GM18951 (cell line): ENCODE measurements at regions of chr5 and their contacts with region 1.

Region 1: GRCh38 chr5:172714491-172715421 is 56.2 kb downstream of the DUSP1 start:
- POLR2A ChIP-seq: no peak

Region 2: DNA sequence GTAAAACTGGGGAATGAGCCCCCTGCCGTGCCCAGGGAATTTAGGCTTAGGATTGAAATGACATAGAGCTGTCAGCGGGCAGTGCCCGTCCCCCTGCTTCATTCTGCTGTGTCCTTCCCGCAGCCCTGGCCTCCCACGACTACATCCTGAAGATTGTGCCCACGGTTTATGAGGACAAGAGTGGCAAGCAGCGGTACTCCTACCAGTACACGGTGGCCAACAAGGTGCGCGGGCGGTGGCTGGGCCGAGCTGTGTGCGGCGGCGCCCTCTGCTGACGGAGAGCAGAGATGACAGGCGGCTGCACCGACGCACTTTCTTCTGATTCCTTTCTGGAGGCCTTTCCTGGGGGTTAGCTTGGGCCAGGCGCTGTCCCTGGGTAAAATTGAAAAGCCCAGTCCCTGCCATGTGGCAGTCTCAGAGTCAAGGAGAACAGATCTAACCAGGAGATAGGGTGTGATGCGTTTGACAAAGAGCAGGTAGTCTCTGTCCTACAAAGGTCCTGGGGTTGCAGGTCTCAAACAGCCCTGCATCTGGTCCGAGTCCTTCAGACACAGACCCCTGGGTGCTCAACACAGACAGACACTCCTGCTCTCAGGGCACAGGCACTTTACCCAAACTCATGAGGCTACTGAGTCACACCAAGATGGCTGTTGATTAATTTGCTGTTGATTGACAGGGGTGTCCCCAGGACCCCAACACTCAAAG is 217.7 kb after region 1 on chr5:
- in situ Hi-C with region 1: loop called (anchors 5 kb)
- POLR2A ChIP-seq: no peak

Region 3: GRCh38 chr5:173435447-173435846 is 720.7 kb after region 1 on chr5:
- in situ Hi-C with region 1: no loop called
- POLR2A ChIP-seq: no peak

Region 4: DNA sequence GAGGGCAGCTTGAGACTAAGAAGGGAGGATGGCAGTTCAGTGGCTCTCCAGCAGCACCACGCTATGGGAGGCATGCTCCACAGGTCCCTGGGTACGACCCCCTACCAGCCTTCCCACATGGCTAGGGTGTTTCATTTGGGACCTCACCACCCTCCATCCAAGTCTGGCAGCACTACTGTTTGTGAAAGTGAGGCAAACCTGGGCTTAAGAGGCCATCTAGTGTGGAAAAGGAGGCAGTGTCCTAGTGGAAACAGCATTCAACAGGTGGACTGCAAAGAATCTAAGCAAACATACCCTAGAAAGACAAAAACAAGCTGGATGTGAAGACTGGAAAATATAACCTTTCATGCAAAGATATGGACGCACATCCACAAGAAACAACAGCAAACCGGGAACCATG is 1269.5 kb after region 1 on chr5:
- in situ Hi-C with region 1: no loop called
- POLR2A ChIP-seq: no peak